ENCODE measurements at regions of chr14 and their contacts with region 1.

Region 1: GRCh38 chr14:24332268-24332993 is 2.4 kb downstream of the ADCY4 start:
- DNase-seq: peak; percentile 79
- H3K4me3 Mint-ChIP-seq: peak overlapping the region; percentile 72
- H3K27ac Mint-ChIP-seq: peak overlapping the region; percentile 52
- H3K4me1 Mint-ChIP-seq: peaks cover 32% of the 10 kb centered on the region
- H3K27me3 Mint-ChIP-seq: no peaks in the 10 kb centered on the region
- CTCF ChIP-seq: peak; percentile 54

Region 2: DNA sequence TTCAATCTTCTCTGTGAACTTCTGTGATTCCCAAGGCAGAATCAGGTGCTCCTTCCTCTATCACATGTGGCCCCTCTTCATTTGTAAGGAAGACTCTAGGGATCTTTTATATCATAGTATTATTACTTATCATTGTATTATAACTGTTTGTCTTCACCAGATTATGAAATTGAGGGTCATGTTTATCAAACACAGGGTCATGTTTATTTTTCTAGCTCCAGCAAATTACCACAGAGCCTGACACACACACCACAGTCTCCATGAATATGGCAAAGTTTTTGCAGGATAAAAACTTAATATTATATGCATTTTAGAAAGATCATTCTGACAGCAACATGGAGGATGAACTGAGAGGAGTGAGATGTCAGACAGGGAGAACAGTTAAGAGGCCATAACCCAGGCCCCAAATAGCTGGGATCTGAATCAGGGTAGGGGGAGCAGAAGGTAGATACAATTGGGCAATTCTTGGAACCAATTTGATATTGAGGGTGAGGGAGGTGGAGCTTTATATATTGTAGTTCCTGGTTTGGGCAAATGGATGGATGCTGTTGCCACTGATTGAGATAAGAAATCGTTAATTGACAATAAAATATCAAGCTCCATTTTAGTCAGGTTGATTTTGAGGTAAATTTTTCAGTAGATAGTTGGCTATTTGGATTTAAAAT is 565.6 kb before region 1 on chr14:
- CTCF ChIA-PET with region 1: no interaction called
- intact Hi-C with region 1: no loop called
- DNase-seq: no peak
- H3K4me3 Mint-ChIP-seq: no peak overlapping the region
- H3K27ac Mint-ChIP-seq: no peak overlapping the region
- H3K4me1 Mint-ChIP-seq: no peaks in the 10 kb centered on the region
- H3K27me3 Mint-ChIP-seq: peaks cover 50% of the 10 kb centered on the region
- CTCF ChIP-seq: no peak

Region 3: DNA sequence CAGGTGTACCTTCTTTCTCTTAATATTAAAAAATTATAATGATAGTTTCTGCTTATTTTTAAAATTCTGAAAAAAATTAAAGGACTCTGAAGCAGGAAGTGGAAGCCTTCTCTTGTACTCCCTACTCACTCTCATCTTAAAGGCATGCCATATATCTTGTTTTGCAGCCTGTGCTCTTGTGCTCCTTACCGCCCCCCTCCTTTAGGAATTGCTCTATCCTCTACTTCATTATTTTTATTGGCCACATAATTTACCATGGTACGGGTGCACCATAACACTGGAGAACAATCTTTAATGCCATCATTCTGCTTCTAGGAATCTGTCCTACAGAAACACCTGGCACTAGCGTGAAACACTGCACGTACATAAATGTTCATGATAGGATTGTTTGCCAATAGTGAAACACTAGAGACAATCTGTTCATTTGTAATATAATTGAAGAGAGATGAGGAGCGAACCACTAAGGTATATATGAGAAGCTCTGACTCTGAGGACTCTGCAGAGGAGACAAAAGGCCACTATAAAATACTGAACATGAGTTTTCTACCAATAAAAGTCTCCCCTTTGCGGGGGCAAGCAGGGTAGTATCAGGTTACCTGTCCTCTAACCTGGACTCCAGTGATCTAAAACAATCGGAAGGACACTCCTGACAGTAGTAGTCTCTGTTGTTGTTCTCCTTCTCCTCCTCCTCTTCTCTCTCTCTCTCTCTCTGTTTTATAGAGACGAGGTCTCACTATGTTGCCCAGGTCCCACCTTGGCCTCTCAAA is 60.1 kb after region 1 on chr14:
- CTCF ChIA-PET with region 1: interaction called, 12 read pairs
- intact Hi-C with region 1: no loop called
- DNase-seq: peak; percentile 71
- H3K4me3 Mint-ChIP-seq: peak overlapping the region; percentile 55
- H3K27ac Mint-ChIP-seq: peak overlapping the region; percentile 95
- H3K4me1 Mint-ChIP-seq: peaks cover 47% of the 10 kb centered on the region
- H3K27me3 Mint-ChIP-seq: no peaks in the 10 kb centered on the region
- CTCF ChIP-seq: no peak